Heart left ventricle (tissue), 16 donors: ENCODE measurements at regions of chr3 and their contacts with region 1.

Region 1: GRCh38 chr3:186938716-186939115 is 8.4 kb downstream of the ST6GAL1 start:
- DNase-seq: peak in 4 of 5 donors; percentile 63 to 81 (median 75)
- ATAC-seq: peak; percentile 82 to 90 (median 89)
- H3K4me3 ChIP-seq: no peak overlapping the region
- H3K27ac ChIP-seq: peak overlapping the region; percentile 67 to 92 (median 80)
- H3K4me1 ChIP-seq: peaks cover 2 to 79% (median 55%) of the 10 kb centered on the region in 12 donors
- H3K27me3 ChIP-seq: no peaks in the 10 kb centered on the region
- CTCF ChIP-seq: no peak
- POLR2A ChIP-seq: no peak

Region 2: DNA sequence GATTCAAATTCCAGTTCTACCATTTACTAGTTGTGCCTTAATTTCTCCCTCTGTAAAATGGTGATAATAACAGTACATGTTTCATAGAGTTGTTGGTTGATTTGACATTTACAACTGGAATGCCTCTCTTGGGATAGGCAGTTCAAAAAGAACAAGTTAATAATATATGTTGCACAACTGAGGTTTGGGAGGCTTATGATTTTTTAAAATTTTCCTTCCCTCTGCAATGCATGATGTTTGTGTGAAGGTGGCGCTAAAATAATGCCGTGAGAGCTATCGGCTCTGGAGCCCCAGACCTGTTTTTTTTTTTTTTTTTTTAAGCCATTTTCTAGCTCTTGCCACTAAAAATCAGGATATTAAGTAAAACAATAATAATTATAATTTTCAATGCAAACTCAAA is 349.6 kb before region 1 on chr3:
- intact Hi-C with region 1: loop called in 1 of 10 experiments (anchors 5 kb)
- DNase-seq: no peak
- ATAC-seq: no peak
- H3K4me3 ChIP-seq: no peak overlapping the region
- H3K27ac ChIP-seq: no peak overlapping the region
- H3K4me1 ChIP-seq: no peaks in the 10 kb centered on the region
- H3K27me3 ChIP-seq: no peaks in the 10 kb centered on the region
- CTCF ChIP-seq: peak in 6 of 12 donors; percentile 10 to 30 (median 18)
- POLR2A ChIP-seq: no peak

Region 3: GRCh38 chr3:186976837-186977750 is 38.4 kb after region 1 on chr3:
- intact Hi-C with region 1: loop called in 9 of 10 experiments (anchors 2 to 5 kb)
- DNase-seq: peak; percentile 68 to 90 (median 80)
- ATAC-seq: peak; percentile 85 to 92 (median 88)
- H3K4me3 ChIP-seq: peak overlapping the region in 8 of 12 donors; percentile 1 to 28 (median 19)
- H3K27ac ChIP-seq: peak overlapping the region; percentile 80 to 93 (median 90)
- H3K4me1 ChIP-seq: peaks cover 15 to 78% (median 39%) of the 10 kb centered on the region in 12 donors
- H3K27me3 ChIP-seq: no peaks in the 10 kb centered on the region
- CTCF ChIP-seq: peak in 7 of 12 donors; percentile 4 to 19 (median 13)
- POLR2A ChIP-seq: no peak

Region 4: DNA sequence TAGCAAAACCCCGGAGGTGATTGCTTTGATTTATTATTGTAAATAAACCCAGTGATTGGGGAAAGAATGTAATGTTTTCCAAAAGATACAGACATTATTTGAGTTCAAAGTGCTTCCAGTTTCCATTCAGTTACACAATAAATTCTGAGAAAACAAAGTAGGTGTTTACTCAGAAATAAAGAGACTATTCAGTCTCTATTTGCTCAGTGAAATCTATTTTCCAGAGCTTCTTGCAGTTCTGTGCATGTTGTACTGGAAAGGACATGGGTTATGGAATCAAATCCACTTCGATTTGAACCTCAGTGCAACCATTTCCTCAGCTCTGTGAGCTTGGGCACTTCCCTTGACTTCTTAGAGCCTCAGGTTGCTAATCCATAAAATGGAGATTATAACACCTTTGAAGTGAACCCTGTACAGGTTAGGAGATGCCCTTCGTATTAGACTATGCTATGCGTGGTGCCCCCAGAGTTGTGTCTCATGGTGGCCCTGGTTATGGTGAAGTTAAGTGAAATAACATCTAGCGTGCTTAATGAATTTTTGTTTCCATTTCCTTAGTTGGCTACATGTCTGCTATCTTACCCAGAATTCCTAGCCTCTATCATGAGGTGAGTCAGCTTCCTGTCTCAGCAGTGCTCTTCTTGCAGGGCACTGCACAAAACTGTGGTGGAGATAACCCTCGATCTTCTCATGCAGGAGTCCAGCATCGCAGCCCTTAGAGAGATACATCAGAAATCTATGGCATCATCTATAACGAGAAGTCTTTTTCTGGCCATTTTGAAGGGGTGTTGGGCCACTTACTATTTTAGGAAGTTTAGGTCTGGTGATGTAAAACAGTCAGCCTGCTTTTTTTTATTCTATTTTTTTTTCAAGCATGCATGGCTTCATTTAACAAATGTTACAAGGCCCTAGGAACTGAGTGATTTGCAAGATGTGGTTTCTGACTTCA is 102.9 kb after region 1 on chr3:
- intact Hi-C with region 1: loop called in 1 of 10 experiments (anchors 5 kb)
- DNase-seq: no peak
- ATAC-seq: peak in 3 of 4 donors; percentile 36 to 68 (median 62)
- H3K4me3 ChIP-seq: no peak overlapping the region
- H3K27ac ChIP-seq: peak overlapping the region in 7 of 12 donors; percentile 6 to 87 (median 23)
- H3K4me1 ChIP-seq: peaks cover 7 to 71% (median 46%) of the 10 kb centered on the region in 12 donors
- H3K27me3 ChIP-seq: no peaks in the 10 kb centered on the region
- CTCF ChIP-seq: no peak
- POLR2A ChIP-seq: no peak